ENCODE measurements at regions of chr16 and their contacts with region 1.

Region 1: DNA sequence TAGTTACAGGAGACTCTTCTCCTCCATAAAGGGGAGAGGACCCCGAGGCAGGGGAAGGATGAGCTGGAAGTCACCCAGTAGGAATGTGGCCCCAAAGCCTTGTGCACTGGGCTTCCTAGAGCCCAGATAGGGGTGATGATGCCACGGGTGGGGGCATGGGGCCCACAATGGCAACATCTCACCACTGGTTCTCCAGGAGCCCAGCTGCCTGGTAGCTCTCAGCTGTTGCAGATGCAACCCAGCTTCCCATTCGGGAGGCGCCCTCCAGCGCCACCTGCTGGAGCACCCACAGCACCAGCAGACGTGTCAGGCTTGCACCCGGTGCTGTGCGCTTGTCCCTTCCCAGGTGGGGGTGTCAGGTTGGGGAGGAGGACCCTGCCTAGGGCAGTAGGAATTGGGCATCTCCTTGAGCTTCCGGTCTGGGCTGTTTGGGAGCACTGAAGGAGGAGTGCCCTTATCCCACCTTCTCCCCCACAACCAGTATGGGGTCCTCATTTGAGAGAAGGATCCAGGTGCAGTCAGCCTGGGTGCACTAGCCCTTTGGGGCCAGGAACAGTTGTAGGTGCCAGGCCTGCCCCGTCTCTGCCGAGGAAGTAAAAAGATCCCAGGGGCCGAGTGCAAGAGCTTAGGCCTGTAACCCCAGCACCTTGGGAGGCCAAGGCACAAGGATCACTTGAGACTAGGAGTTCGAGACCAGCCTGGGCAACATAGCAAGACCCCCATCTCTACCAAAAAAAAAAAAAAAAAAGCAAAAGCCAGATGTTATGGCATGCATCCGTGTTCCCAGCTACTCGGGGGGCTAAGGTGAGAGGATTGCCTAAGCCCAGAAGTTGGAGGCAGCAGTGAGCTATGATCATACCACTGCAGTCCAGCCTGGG is 14.4 kb downstream of the CDIPT start:
- DNase-seq: peak; percentile 86
- ATAC-seq: peak; percentile 79
- H3K4me3 Mint-ChIP-seq: no peak overlapping the region
- H3K27ac Mint-ChIP-seq: no peak overlapping the region
- H3K4me1 Mint-ChIP-seq: peaks cover 10% of the 10 kb centered on the region
- H3K27me3 Mint-ChIP-seq: no peaks in the 10 kb centered on the region; the same call in 1 of the 2 replicates
- CTCF ChIP-seq: peak; percentile 78

Region 2: GRCh38 chr16:29192325-29193247 is 656.1 kb before region 1 on chr16:
- CTCF ChIA-PET with region 1: no interaction called
- POLR2A ChIA-PET with region 1: no interaction called
- DNase-seq: no peak
- ATAC-seq: no peak
- H3K4me3 Mint-ChIP-seq: no peak overlapping the region
- H3K27ac Mint-ChIP-seq: no peak overlapping the region
- H3K4me1 Mint-ChIP-seq: no peaks in the 10 kb centered on the region
- H3K27me3 Mint-ChIP-seq: no peaks in the 10 kb centered on the region
- CTCF ChIP-seq: no peak

Region 3: DNA sequence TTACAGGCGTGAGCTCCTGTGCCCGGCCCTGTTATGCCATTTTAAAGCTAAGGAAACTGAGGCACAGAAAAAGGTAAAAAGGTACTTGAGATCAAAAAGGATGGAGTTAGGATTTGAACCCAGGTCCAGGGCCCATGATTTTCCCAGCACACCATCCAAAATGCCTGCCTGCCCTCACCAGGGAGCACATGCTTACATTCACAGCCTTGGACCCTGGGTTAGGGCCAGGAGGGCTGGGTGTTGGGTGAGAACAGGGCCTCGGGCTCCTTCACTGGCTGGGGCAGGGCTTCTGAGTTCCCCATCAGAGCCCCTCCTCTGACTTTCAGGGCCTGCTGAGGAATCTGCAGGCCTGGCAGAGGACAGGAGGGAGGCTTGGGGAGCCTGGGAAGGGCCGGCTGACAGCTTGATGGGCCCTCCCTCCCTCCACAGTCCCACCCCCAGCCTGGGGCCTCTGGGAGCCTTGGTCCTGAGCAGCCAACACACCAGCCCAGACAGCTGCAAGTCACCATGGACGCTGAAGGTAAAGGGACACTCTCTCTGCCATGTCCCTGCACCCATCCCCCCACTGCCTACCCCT is 169.9 kb before region 1 on chr16 and contains the start of gene QPRT:
- CTCF ChIA-PET with region 1: no interaction called
- POLR2A ChIA-PET with region 1: no interaction called
- DNase-seq: peak; percentile 90
- ATAC-seq: peak; percentile 85
- H3K4me3 Mint-ChIP-seq: peak within 1 kb of the TSS; percentile 91
- H3K27ac Mint-ChIP-seq: peak within 1 kb of the TSS; percentile 100
- H3K4me1 Mint-ChIP-seq: peaks cover 40% of the 10 kb centered on the region
- H3K27me3 Mint-ChIP-seq: no peaks in the 10 kb centered on the region
- CTCF ChIP-seq: no peak
- total RNA-seq, gene QPRT: 138 to 187 TPM (median 182 TPM) in 3 replicates

Region 4: GRCh38 chr16:29700253-29700987 is 148.2 kb before region 1 on chr16:
- CTCF ChIA-PET with region 1: interaction called, 17 read pairs
- POLR2A ChIA-PET with region 1: no interaction called
- DNase-seq: peak; percentile 83
- ATAC-seq: peak; percentile 66
- H3K4me3 Mint-ChIP-seq: no peak overlapping the region
- H3K27ac Mint-ChIP-seq: no peak overlapping the region
- H3K4me1 Mint-ChIP-seq: peaks cover 38% of the 10 kb centered on the region
- H3K27me3 Mint-ChIP-seq: no peaks in the 10 kb centered on the region
- CTCF ChIP-seq: peak; percentile 87

Region 5: DNA sequence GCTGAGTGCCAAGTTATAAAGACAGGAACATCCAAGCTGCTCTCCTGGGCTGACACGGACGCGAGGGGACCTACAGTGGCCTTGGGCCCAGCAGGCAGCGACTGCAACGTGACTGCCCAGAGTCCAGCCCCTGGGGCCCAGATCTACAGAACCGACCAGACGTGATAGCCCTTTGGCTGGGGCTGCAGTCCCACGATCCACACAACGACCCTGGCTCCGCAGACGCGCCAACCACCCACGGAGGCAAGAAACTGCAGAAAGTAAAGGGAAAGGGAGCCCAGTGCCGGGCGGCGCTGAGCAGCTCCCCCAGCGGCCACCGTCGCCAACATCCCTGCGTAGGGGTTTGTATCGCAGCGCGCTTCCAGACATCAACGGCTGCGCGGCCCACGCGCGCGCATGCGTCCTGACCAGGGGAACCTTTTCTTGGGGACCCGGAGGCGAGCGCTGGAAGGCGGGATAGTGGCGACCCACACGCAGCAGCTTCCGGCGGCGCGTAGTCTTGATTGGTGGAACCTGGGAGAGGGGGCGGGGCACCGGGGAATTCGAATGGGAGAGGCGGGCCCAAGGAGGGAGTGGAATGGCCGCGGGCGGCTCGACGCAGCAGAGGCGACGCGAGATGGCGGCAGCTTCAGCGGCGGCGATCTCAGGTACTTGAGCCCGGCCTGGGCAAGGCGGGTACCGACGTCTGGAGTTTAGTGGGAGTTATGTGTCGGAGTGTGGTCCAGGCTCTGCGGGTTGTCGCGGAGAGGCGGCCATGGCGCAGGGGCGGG is 58.3 kb before region 1 on chr16 and contains the start of gene KIF22:
- CTCF ChIA-PET with region 1: interaction called, 17 read pairs
- POLR2A ChIA-PET with region 1: no interaction called
- DNase-seq: peak; percentile 100
- ATAC-seq: peak; percentile 96
- H3K4me3 Mint-ChIP-seq: peak within 1 kb of the TSS; percentile 98
- H3K27ac Mint-ChIP-seq: peak within 1 kb of the TSS; percentile 97
- H3K4me1 Mint-ChIP-seq: peaks cover 25% of the 10 kb centered on the region
- H3K27me3 Mint-ChIP-seq: peaks cover 19% of the 10 kb centered on the region
- CTCF ChIP-seq: no peak
- total RNA-seq, gene KIF22: 165 to 182 TPM (median 175 TPM) in 3 replicates

Region 6: DNA sequence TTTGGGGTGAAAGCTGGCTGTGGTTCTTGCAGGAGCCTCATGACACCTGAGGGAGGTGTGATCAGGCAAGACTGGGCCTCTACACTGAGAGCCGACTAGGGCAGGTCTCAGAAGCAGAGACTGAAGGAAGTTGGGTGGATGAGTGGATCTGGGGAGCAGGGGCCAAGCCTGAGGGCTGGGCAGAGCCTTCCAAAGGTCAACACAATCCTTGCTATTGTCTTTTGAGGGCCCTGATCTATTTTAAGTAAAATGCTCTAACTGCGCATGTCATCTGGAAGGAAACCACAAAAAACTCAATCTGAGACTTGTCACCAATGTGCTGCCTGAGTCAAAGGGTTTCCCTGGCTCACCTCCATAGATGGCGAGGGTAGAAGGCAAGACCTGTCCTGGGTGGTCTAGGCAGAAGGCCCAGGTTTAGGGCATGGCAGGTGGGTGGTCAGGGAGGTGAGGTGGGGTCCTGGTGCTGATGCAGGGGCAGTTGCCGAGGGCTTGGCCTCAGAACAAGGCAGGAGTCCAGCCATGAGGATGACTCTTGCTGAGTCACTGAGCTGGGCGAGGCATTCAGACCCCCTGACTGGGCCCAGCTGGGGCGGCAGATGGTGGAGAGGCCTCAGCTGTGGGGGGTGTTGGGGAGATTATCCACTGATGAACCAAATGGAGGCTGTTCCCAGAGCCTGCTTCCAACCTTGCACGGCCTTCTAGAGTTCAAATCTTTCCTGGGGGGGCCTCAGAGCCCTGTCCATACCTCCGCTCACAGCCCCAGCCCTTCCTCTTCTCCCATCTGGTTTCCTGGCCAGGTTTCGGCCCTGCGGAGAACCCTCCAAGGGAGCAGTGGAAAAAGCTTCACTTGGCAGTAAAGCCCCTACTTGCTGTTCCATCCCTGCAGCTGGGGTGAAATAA is 23.3 kb before region 1 on chr16:
- CTCF ChIA-PET with region 1: interaction called, 68 read pairs
- POLR2A ChIA-PET with region 1: interaction called, 3 read pairs
- DNase-seq: no peak
- ATAC-seq: peak; percentile 13; the same call in 1 of the 2 replicates
- H3K4me3 Mint-ChIP-seq: no peak overlapping the region
- H3K27ac Mint-ChIP-seq: peak overlapping the region; percentile 23; the same call in 1 of the 2 replicates
- H3K4me1 Mint-ChIP-seq: peaks cover 20% of the 10 kb centered on the region
- H3K27me3 Mint-ChIP-seq: no peaks in the 10 kb centered on the region
- CTCF ChIP-seq: no peak

Region 7: GRCh38 chr16:29877266-29877961 is 28.8 kb after region 1 on chr16:
- CTCF ChIA-PET with region 1: interaction called, 17 read pairs
- POLR2A ChIA-PET with region 1: no interaction called
- DNase-seq: peak; percentile 100
- ATAC-seq: peak; percentile 97
- H3K4me3 Mint-ChIP-seq: peak overlapping the region; percentile 87
- H3K27ac Mint-ChIP-seq: peak overlapping the region; percentile 98
- H3K4me1 Mint-ChIP-seq: peaks cover 10% of the 10 kb centered on the region
- H3K27me3 Mint-ChIP-seq: peaks cover 3% of the 10 kb centered on the region; the same call in 1 of the 2 replicates
- CTCF ChIP-seq: no peak

Region 8: DNA sequence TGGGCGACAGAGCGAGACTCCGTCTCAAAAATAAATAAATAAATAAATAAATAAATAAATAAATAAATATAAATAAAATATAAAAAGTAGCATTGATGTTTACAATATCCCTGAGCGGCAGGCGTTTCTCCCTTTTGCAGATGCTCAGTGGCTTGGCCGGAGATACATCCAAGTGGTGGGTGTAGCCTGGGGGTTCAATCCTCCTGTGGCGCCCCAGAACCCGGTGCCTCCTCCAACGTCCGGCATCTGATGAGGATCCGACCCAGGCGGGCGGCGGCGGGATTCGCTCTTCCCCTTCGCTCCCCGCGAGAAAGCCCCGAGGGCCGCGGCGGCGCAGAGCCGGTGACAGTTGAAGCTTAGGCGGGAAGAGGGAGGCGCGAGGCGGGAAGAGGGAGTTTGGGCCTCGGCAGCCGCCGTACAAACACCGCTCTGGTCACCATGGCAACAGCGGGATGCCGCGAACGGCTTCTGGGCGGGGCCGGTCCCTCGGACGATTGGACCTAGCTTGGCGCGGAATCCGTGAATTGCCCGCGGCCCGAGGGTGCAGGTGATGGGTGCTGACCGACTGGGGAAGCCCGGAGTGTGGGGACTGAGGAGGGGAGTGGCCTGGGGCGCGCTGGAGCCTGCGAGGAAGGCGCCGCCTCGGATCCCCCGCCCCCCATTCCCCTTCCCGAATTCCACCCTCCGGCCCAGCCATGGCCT is 204.2 kb after region 1 on chr16:
- CTCF ChIA-PET with region 1: interaction called, 12 read pairs
- POLR2A ChIA-PET with region 1: no interaction called
- DNase-seq: peak; percentile 94
- ATAC-seq: peak; percentile 60
- H3K4me3 Mint-ChIP-seq: peak overlapping the region; percentile 82
- H3K27ac Mint-ChIP-seq: no peak overlapping the region
- H3K4me1 Mint-ChIP-seq: peaks cover 14% of the 10 kb centered on the region
- H3K27me3 Mint-ChIP-seq: peaks cover 37% of the 10 kb centered on the region
- CTCF ChIP-seq: no peak